ENCODE measurements at regions of chr1 and their contacts with region 1.

Region 1: DNA sequence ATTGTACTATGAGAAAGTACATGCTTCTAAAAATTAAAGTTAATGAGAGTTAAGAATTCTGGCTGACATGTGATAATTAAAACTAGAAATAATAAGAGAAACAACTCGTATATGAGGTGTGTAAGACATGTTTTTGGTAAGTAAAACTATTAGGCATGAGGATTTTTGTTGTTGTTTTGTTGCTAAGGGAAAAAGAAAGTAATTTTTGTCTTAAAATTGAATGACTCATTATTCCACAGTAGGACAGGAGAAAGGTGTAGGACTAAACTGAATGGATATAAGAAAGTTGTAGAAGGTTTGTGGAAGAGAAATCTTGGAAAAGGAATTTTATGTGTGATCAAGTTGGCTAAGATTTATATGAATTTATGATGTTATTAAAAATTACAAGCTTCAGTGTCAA is 54.8 kb downstream of the TBX19 start:
- DNase-seq: no peak
- ATAC-seq: no peak
- H3K4me3 ChIP-seq: no peak overlapping the region
- H3K27ac ChIP-seq: no peak overlapping the region
- H3K4me1 ChIP-seq: no peaks in the 10 kb centered on the region
- H3K27me3 ChIP-seq: no peaks in the 10 kb centered on the region
- CTCF ChIP-seq: no peak
- POLR2A ChIP-seq: no peak

Region 2: GRCh38 chr1:168243636-168244212 is 91.8 kb before region 1 on chr1:
- in situ Hi-C with region 1: no loop called
- intact Hi-C with region 1: no loop called
- DNase-seq: no peak
- ATAC-seq: no peak
- H3K4me3 ChIP-seq: no peak overlapping the region
- H3K27ac ChIP-seq: no peak overlapping the region
- H3K4me1 ChIP-seq: peaks cover 0 to 9% of the 10 kb centered on the region in 2 donors
- H3K27me3 ChIP-seq: no peaks in the 10 kb centered on the region
- CTCF ChIP-seq: no peak
- POLR2A ChIP-seq: no peak

Region 3: DNA sequence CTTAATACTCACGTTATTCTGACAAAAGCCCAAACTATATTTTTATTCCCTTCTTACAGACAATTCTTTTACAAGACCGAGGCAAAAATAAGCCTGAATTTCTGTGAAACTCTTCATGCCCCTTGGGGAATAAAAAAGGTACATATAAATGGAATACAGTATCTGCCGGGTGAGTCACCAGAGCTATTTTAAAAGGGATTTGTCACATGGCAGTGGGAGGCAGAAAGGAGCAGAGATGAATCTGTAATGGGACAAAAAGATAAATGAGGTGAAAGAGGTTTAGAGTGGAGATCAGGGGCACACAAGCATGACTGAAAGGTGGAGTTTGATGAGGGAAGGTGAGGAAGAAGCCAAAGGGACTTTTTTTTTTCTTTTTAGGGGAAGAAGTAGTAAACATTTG is 249.7 kb after region 1 on chr1:
- in situ Hi-C with region 1: loop called in 1 of 4 experiments (anchors 10 kb)
- intact Hi-C with region 1: no loop called
- DNase-seq: no peak
- ATAC-seq: peak; percentile 58 to 84
- H3K4me3 ChIP-seq: no peak overlapping the region
- H3K27ac ChIP-seq: no peak overlapping the region
- H3K4me1 ChIP-seq: peaks cover 0 to 7% of the 10 kb centered on the region in 2 donors
- H3K27me3 ChIP-seq: no peaks in the 10 kb centered on the region
- CTCF ChIP-seq: no peak
- POLR2A ChIP-seq: no peak

Region 4: GRCh38 chr1:169348383-169349036 is 1013.0 kb after region 1 on chr1:
- in situ Hi-C with region 1: loop called in 3 of 4 experiments (anchors 10 to 25 kb)
- intact Hi-C with region 1: no loop called
- DNase-seq: no peak
- ATAC-seq: peak in 1 of 2 donors; percentile 54
- H3K4me3 ChIP-seq: no peak overlapping the region
- H3K27ac ChIP-seq: no peak overlapping the region
- H3K4me1 ChIP-seq: no peaks in the 10 kb centered on the region
- H3K27me3 ChIP-seq: no peaks in the 10 kb centered on the region
- CTCF ChIP-seq: peak; percentile 65 to 85 (median 82)
- POLR2A ChIP-seq: no peak